ENCODE measurements at regions of chr1 and their contacts with region 1.

Region 1: GRCh38 chr1:174800216-174800851 is 199.4 kb upstream of the CACYBP start:
- DNase-seq: peak; percentile 47
- H3K4me3 Mint-ChIP-seq: no peak overlapping the region
- H3K27ac Mint-ChIP-seq: no peak overlapping the region
- H3K4me1 Mint-ChIP-seq: peaks cover 8% of the 10 kb centered on the region
- H3K27me3 Mint-ChIP-seq: no peaks in the 10 kb centered on the region

Region 2: DNA sequence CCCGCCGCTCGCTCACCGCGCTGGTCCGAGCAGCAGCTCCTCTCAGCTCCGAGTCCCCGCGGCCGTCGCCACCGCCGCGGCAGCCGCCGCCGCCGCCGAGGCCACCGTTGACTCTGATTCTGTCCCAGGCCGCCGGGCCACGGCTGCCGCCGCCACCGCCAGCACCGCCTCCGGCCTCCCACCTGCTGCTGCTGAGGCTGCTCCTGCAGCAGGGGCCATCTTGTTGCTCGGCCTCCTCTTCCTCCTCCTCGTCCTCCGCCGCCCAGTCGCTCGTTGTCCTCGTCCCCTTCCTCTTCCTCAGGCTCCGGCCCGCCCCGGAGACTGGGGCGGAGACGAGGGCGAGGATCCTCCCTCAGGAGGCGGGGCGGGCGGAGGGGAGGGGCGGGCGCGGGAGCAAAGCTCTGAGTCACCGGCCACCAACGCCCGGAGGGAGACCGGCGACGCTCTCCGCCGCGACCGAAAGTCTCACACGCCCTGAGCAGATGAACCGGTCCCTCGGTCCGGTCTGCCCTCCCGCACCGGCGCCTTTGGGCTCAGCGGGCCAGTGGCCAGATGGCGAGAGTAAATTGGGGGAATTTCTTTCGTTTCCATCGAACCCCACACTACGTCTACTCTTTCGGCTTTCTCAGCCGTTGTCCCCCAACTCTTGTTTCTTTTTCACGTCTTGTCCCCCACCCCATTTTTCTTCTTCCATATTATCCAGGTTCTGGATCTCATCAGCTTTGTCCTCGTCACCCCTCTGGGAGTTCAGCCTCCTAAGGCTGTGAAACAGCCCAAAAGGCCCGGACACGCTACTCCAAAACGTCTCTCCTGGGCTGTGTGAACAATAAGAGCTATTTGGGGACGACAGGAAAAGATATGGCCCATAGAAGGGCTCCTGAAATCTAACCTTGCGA is 778.0 kb before region 1 on chr1 and contains the start of gene RC3H1:
- CTCF ChIA-PET with region 1: no interaction called
- intact Hi-C with region 1: loop called (anchors 1 kb)
- DNase-seq: peak; percentile 92
- H3K4me3 Mint-ChIP-seq: peak within 1 kb of the TSS; percentile 93
- H3K27ac Mint-ChIP-seq: peak within 1 kb of the TSS; percentile 94
- H3K4me1 Mint-ChIP-seq: peaks cover 32% of the 10 kb centered on the region
- H3K27me3 Mint-ChIP-seq: no peaks in the 10 kb centered on the region
- total RNA-seq, gene RC3H1: 24.2 to 27.1 TPM

Region 3: GRCh38 chr1:174815036-174815435 is 14.7 kb after region 1 on chr1:
- CTCF ChIA-PET with region 1: interaction called, 5 read pairs
- intact Hi-C with region 1: loop called (anchors 1 kb)
- DNase-seq: peak; percentile 65
- H3K4me3 Mint-ChIP-seq: no peak overlapping the region
- H3K27ac Mint-ChIP-seq: peak overlapping the region; percentile 33
- H3K4me1 Mint-ChIP-seq: peaks cover 34% of the 10 kb centered on the region
- H3K27me3 Mint-ChIP-seq: no peaks in the 10 kb centered on the region

Region 4: DNA sequence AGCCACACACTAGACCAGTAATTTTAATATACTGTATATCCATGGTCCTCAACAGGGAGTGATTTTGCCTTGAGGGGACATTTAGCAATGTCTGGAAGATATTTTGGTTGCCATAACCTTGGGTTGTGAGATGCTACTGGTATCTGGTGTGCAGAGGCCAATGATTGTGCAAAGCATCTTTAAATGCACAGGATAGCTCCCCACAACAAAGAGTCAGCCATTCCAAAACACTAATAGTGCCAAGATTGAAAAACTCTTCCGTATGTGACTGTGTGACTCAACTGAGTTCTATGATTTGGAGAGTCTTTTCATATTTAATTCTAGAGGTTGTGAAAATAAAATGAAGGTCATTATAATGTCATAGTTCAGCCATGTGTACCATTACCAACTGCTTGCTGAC is 58.0 kb after region 1 on chr1:
- CTCF ChIA-PET with region 1: no interaction called
- intact Hi-C with region 1: no loop called
- DNase-seq: no peak
- H3K4me3 Mint-ChIP-seq: no peak overlapping the region
- H3K27ac Mint-ChIP-seq: no peak overlapping the region
- H3K4me1 Mint-ChIP-seq: no peaks in the 10 kb centered on the region
- H3K27me3 Mint-ChIP-seq: no peaks in the 10 kb centered on the region

Region 5: GRCh38 chr1:174968750-174969244 is 168.5 kb after region 1 on chr1:
- CTCF ChIA-PET with region 1: no interaction called
- intact Hi-C with region 1: loop called (anchors 1 kb)
- DNase-seq: peak; percentile 49
- H3K4me3 Mint-ChIP-seq: peak overlapping the region; percentile 51
- H3K27ac Mint-ChIP-seq: peak overlapping the region; percentile 86
- H3K4me1 Mint-ChIP-seq: peaks cover 63% of the 10 kb centered on the region
- H3K27me3 Mint-ChIP-seq: no peaks in the 10 kb centered on the region

Region 6: DNA sequence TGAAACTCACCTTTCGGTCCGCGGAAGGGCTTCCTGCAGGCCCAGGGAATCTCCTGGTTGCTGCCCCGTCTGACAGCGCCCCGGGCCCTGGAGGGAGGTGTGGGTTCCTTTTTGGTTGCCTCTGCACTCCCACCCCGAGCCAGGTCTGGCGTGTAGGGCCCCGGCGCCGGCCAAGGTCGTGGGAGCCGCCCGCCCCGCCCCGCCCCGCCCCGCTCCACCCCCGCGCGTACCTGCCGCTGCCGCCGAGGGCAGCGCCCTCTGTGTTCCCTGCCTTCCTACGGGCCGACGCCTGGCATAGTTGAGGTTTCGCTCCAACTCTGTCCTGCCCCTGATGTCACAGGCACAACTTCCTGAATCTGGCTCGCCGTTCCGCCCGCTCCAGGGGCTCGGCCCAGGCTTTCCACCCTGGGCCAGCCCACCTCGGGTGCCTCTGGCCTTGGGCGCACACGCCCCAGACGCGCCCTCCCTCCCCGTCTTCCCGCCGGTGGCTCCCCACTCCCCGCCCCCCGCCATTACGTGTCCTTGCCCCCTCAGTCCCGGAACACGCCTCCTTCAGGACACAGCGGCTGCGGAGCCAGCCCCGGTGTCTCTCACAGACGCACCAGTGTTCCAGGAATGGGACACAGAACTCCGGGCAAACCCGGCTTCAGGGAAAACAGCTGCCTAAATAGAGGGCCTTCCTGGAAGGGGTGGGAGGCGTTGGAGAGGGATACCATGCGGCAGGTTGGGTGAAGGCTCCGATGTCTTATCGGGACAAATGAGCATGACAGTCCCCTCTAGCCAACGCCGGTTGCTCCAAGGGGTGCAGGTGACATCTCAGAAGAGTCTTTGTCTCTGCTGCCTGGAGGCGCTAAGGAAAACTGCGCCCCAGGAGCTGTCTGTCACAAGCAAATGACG is 392.5 kb after region 1 on chr1 and contains the start of gene KIAA0040:
- CTCF ChIA-PET with region 1: no interaction called
- intact Hi-C with region 1: loop called (anchors 10 kb)
- DNase-seq: peak; percentile 63
- H3K4me3 Mint-ChIP-seq: peak within 1 kb of the TSS; percentile 92
- H3K27ac Mint-ChIP-seq: peak within 1 kb of the TSS; percentile 93
- H3K4me1 Mint-ChIP-seq: peaks cover 45% of the 10 kb centered on the region
- H3K27me3 Mint-ChIP-seq: no peaks in the 10 kb centered on the region
- total RNA-seq, gene KIAA0040: 19.5 to 21.4 TPM

Region 7: GRCh38 chr1:175481126-175482066 is 681.1 kb after region 1 on chr1:
- CTCF ChIA-PET with region 1: no interaction called
- intact Hi-C with region 1: no loop called
- DNase-seq: no peak
- H3K4me3 Mint-ChIP-seq: no peak overlapping the region
- H3K27ac Mint-ChIP-seq: no peak overlapping the region
- H3K4me1 Mint-ChIP-seq: no peaks in the 10 kb centered on the region
- H3K27me3 Mint-ChIP-seq: peaks cover 19% of the 10 kb centered on the region